Astrocyte of the cerebellum (primary cell): ENCODE measurements at regions of chr2 and their contacts with region 1.

Region 1: DNA sequence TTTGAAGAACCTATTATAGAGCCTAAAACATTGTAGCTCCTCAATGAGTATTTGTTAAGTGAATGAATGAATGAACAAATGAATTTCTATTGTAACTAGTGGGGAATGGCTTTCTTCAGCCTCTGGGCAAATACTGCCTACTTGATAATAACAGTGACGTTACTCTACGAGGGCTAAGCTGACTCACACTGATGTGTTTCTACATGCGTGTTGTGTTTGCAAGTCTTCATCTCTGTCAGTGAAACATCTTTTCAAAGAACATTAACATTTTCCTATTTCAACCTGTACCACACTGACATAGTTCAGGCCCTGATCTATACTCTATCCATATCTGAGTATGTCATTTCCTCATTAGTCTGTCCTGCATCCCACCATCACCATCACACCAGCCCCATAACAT is 319.9 kb upstream of the ACVR2A start:
- DNase-seq: no peak
- H3K4me3 ChIP-seq: no peak overlapping the region
- CTCF ChIP-seq: no peak

Region 2: DNA sequence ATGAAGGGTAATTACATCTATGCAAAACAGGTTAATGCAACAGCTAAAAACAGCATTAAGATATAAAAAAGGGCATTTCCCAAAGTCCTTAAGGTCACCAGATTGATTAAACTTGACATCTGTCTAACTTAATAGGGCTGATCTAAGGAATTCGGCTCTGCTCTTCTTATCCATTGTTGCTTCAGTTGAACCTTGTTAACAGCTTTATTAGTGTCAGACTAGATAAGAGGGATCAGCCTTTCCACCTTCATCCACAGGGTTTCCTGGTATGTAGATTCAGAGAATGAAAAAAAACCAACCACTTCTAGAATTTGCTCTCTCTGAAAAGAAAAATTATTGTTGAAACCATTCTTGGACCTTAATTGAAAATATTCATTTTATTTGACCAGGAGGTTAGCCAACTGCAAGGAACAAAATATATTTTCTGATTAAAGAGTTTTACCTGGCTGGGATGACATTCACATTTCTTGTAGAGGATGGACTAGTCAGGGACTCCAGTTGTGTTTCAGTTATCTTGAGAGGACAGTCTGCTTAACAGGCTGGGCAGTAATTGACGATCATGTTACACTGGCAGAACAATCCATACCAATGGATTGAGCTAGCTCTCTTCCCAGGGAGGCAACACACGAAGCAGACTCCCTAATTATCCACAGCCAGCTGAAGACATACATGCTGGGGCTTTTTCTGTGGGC is 37.5 kb before region 1 on chr2:
- in situ Hi-C with region 1: loop called (anchors 5 kb)
- DNase-seq: no peak
- H3K4me3 ChIP-seq: no peak overlapping the region
- CTCF ChIP-seq: no peak

Region 3: GRCh38 chr2:147560810-147561535 is 36.1 kb after region 1 on chr2:
- in situ Hi-C with region 1: no loop called
- DNase-seq: no peak
- H3K4me3 ChIP-seq: no peak overlapping the region
- CTCF ChIP-seq: no peak